CD4-positive, alpha-beta memory T cell (primary cell): ENCODE measurements at regions of chr10 and their contacts with region 1.

Region 1: DNA sequence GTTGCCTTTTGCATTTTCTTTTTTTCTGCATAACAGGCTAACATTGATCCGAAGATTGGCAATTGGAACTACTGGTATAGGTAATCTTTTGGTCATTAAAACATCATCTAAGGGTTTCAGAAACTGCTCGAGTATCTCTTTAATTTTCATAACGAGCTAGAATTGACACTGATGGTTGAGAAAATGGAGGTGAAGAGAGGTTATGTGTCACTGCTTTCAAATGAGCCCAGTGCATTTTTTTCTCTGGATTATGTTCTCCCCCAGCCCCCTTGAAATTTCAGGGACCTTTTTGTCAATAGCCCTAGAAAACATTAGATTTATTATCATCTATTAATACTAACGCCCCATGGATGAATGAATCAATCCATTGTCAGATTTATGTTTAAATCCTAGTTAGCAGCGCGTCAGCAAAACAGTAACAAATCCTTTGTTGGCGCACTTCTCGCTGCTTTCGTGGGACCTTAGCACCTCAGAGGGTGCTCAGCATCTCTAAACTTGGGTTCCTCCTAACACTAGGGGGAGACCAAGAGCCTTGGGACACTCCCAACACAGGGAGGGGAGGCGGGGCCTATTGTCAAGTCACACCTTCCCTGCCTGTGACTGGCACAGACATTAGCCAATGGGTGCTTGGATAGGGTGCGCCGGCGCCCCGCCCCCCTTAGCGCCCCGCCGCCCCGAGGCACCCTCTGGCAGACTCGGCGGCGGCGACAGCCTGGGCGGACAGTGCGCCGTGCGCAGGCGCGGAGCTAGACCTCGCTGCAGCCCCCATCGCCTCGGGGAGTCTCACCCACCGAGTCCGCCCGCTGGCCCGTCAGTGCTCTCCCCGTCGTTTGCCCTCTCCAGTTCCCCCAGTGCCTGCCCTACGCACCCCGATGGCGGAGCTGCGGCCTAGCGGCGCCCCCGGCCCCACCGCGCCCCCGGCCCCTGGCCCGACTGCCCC is at the start of gene SUFU:
- DNase-seq: peak; percentile 98 to 99 (median 98)
- H3K4me3 ChIP-seq: peak within 1 kb of the TSS; percentile 97 to 99
- H3K4me3 Mint-ChIP-seq: peak within 1 kb of the TSS in 2 of 8 donors; percentile 92 to 95
- H3K27ac ChIP-seq: peak within 1 kb of the TSS; percentile 91
- H3K27ac Mint-ChIP-seq: peak within 1 kb of the TSS in 6 of 7 donors; percentile 86 to 95 (median 94)
- H3K4me1 ChIP-seq: peaks cover 54% of the 10 kb centered on the region
- H3K4me1 Mint-ChIP-seq: peaks cover 21 to 49% (median 35%) of the 10 kb centered on the region in 4 donors
- H3K27me3 ChIP-seq: no peaks in the 10 kb centered on the region
- H3K27me3 Mint-ChIP-seq: no peaks in the 10 kb centered on the region
- total RNA-seq, gene SUFU: 20.5 to 22.0 TPM

Region 2: DNA sequence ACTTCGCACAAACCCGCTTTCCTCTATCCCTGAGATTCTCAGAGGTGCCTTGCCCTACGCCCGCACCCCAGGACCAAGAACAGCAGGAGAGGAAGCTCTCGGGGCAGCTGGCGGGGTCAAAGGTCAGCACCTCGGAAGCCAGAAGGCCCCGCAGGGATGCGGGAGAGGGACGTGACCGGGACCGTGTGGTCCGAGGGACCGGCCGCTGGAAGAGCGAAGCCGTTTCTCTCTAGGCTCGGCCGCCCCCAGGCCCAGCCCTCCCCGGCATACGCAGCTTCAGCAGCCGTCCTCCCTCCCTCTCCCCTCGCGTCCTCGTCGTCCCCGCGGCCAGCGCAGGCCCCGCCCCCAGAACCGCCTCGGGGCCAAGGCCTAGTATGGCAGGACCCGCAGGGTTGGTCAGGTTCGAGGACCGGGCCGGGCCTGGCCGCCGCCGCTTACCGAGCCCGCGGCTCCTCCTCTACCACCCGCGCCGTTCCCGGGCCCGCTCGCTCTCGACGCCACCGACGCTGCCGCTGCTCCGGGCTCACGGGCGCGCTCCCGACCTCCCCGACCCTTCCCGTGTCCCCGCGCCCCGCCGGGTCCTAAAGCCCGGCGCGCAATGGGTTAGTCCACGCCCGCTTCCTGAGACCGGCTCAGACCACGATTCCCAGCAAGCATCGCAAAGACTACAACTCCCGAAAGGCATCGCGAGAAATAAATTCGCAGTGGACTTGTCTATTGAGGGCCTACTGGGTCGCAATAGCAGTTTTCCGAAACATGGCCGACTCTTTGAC is 447.7 kb before region 1 on chr10 and contains the start of gene ARMH3:
- CTCF ChIA-PET with region 1: no interaction called
- POLR2A ChIA-PET with region 1: interaction called, 3 read pairs
- intact Hi-C with region 1: loop called (anchors 1 kb)
- DNase-seq: peak; percentile 89 to 92 (median 90)
- H3K4me3 ChIP-seq: peak within 1 kb of the TSS; percentile 89 to 99
- H3K4me3 Mint-ChIP-seq: peak within 1 kb of the TSS; percentile 95 to 98 (median 96)
- H3K27ac ChIP-seq: peak within 1 kb of the TSS; percentile 88
- H3K27ac Mint-ChIP-seq: peak within 1 kb of the TSS; percentile 94 to 99 (median 97)
- H3K4me1 ChIP-seq: peaks cover 51% of the 10 kb centered on the region
- H3K4me1 Mint-ChIP-seq: peaks cover 31 to 54% (median 42%) of the 10 kb centered on the region in 4 donors
- H3K27me3 ChIP-seq: no peaks in the 10 kb centered on the region
- H3K27me3 Mint-ChIP-seq: no peaks in the 10 kb centered on the region
- total RNA-seq, gene ARMH3: 31.4 to 31.8 TPM

Region 3: DNA sequence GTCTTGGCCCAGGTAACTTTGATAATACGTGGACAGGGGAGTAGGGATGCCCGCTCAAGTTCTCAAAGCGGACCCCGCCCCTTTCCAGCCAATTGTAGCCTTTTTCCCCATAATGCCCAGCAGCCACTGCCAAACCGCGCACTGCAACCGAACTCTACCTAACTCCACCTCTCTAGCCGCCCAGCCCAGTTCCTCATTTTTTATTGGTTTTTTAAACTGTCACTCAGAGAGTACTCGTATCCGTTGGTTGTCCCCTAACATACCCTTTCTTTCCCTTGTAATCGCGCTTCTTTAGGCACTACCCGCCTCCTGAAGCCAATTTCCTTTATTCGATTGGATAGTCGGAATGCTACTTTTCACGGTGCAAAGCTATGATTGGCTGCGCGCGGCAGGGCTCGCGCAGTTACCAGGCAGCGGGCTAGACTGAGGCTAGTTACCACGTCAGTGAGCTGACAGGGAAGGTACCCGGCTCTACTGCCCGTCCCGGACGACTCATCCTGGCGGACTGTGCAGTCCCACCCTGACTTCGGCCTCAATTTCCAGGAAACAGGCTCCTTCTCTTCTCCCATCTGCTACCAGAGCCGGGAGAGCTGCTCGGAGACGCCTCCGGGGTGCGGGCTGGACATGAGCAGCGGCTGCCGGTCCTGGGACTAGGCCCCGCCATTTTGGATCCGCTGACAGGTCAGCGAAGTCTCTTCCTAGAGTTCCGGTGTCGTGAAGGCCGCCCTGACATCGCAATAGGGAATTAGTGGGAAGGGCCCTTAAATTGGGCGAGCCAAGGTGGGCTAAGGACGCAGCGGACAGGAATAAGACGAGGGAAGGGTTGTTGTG is 258.2 kb before region 1 on chr10 and contains the start of gene GBF1:
- CTCF ChIA-PET with region 1: no interaction called
- POLR2A ChIA-PET with region 1: interaction called, 6 read pairs
- intact Hi-C with region 1: loop called (anchors 1 kb)
- DNase-seq: peak; percentile 95 to 98 (median 96)
- H3K4me3 ChIP-seq: peak within 1 kb of the TSS; percentile 51 to 94
- H3K4me3 Mint-ChIP-seq: peak within 1 kb of the TSS; percentile 84 to 99 (median 98)
- H3K27ac ChIP-seq: peak within 1 kb of the TSS; percentile 96
- H3K27ac Mint-ChIP-seq: peak within 1 kb of the TSS; percentile 89 to 98 (median 97)
- H3K4me1 ChIP-seq: peaks cover 64% of the 10 kb centered on the region
- H3K4me1 Mint-ChIP-seq: peaks cover 38 to 66% (median 50%) of the 10 kb centered on the region in 4 donors
- H3K27me3 ChIP-seq: peaks cover 6% of the 10 kb centered on the region
- H3K27me3 Mint-ChIP-seq: peaks cover 3 to 16% of the 10 kb centered on the region in 2 donors
- total RNA-seq, gene GBF1: 39.6 to 44.7 TPM

Region 4: GRCh38 chr10:102450194-102450938 is 53.2 kb before region 1 on chr10:
- CTCF ChIA-PET with region 1: interaction called, 30 read pairs
- POLR2A ChIA-PET with region 1: interaction called, 54 read pairs
- intact Hi-C with region 1: loop called (anchors 1 kb)
- DNase-seq: peak; percentile 93 to 96 (median 93)
- H3K4me3 ChIP-seq: peak overlapping the region; percentile 96
- H3K4me3 Mint-ChIP-seq: peak overlapping the region; percentile 90 to 96 (median 94)
- H3K27ac ChIP-seq: peak overlapping the region; percentile 79
- H3K27ac Mint-ChIP-seq: peak overlapping the region; percentile 81 to 97 (median 96)
- H3K4me1 ChIP-seq: peaks cover 23% of the 10 kb centered on the region
- H3K4me1 Mint-ChIP-seq: peaks cover 10 to 31% (median 23%) of the 10 kb centered on the region in 4 donors
- H3K27me3 ChIP-seq: no peaks in the 10 kb centered on the region
- H3K27me3 Mint-ChIP-seq: no peaks in the 10 kb centered on the region

Region 5: GRCh38 chr10:102583435-102584417 is 80.2 kb after region 1 on chr10:
- CTCF ChIA-PET with region 1: interaction called, 64 read pairs
- POLR2A ChIA-PET with region 1: interaction called, 27 read pairs
- intact Hi-C with region 1: loop called (anchors 1 kb)
- DNase-seq: peak; percentile 74 to 83 (median 76)
- H3K4me3 ChIP-seq: no peak overlapping the region
- H3K4me3 Mint-ChIP-seq: no peak overlapping the region
- H3K27ac ChIP-seq: no peak overlapping the region
- H3K27ac Mint-ChIP-seq: peak overlapping the region in 5 of 7 donors; percentile 7 to 84 (median 60)
- H3K4me1 ChIP-seq: peaks cover 8% of the 10 kb centered on the region
- H3K4me1 Mint-ChIP-seq: peaks cover 13 to 20% (median 15%) of the 10 kb centered on the region in 4 donors
- H3K27me3 ChIP-seq: no peaks in the 10 kb centered on the region
- H3K27me3 Mint-ChIP-seq: no peaks in the 10 kb centered on the region

Region 6: DNA sequence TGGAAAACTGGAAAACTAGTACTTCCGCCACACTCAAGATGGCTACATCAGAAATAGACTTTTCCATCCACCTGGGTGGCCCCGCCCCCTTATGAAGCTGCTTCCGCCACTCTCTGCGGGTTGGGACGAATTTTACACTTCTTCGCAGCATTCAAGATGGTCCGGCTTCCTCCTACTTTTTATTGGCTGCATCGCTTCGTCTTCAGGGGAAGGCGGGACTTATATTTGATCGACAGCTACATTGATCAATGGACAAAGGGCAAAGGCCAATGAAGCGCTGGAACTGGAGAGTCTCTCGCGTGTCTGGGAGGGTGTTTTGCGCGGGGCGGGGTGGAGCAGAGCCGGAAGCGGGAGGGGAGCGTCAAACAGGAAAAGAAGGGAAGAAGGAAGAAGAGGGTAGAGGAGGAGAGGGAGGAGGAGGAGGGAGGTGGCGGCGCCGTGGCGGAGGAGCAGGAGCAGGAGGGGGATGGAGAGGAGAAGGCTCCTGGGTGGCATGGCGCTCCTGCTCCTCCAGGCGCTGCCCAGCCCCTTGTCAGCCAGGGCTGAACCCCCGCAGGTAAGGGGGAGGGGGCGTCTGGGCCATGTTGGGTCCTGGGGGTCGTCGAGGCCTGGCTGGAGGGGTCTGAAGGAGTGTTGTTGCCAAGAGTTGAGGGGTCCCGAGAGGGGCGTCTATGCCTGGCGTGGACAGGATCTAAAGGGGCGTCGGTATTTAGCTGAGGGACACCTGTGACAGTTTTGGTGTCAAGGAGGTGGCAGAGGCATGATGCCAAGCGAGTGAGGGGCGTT is 240.2 kb after region 1 on chr10 and contains the start of gene WBP1L:
- CTCF ChIA-PET with region 1: no interaction called
- POLR2A ChIA-PET with region 1: interaction called, 5 read pairs
- intact Hi-C with region 1: loop called (anchors 1 kb)
- DNase-seq: peak; percentile 95 to 98 (median 97)
- H3K4me3 ChIP-seq: peak within 1 kb of the TSS; percentile 79 to 96
- H3K4me3 Mint-ChIP-seq: peak within 1 kb of the TSS; percentile 90 to 99 (median 96)
- H3K27ac ChIP-seq: peak within 1 kb of the TSS; percentile 81
- H3K27ac Mint-ChIP-seq: peak within 1 kb of the TSS; percentile 69 to 99 (median 94)
- H3K4me1 ChIP-seq: peaks cover 35% of the 10 kb centered on the region
- H3K4me1 Mint-ChIP-seq: peaks cover 33 to 50% (median 42%) of the 10 kb centered on the region in 4 donors
- H3K27me3 ChIP-seq: no peaks in the 10 kb centered on the region
- H3K27me3 Mint-ChIP-seq: no peaks in the 10 kb centered on the region
- total RNA-seq, gene WBP1L: 39.3 to 41.1 TPM

Region 7: DNA sequence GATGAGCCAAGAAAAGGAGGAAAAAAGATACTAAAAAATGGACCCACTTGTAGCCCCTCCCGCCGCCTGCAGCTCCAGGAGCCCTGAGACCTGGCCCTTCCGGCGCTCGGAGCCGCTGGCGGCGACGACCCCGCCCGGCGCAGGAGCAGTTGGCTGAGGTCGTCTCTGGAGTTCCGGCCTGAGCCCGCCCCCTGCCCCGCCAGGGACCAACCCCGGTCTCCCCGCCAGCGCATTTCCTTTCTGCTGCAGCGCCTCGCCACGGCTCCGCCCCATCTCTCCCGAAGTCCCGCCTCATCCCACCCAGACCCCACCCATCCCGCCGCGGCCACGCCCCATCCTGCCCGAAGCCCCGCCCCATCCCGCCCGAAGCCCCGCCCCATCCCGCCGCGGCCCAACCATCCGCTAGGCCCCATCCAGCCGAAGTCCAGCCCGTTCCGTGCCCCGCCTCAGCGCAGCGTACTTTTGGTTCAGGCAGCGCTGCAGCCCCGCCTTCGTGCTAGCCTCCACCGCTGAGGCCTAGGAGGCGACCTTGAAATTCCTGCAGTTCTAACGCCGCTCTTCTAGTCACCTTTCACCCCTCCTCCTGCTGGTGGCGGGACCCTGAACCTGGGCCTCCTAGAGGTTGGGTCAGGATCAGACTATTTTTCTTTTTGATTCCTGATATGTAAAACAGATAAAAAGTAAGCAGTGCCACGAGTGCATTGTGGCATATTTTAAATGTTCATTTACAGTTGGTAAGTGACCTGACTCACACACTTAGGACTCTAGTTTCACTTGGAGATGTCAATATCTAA is 1414.7 kb after region 1 on chr10 and contains the start of gene STN1:
- CTCF ChIA-PET with region 1: no interaction called
- POLR2A ChIA-PET with region 1: no interaction called
- intact Hi-C with region 1: loop called (anchors 5 kb)
- DNase-seq: peak; percentile 93 to 96 (median 95)
- H3K4me3 ChIP-seq: peak within 1 kb of the TSS; percentile 69 to 95
- H3K4me3 Mint-ChIP-seq: peak within 1 kb of the TSS; percentile 92 to 99 (median 96)
- H3K27ac ChIP-seq: peak within 1 kb of the TSS; percentile 82
- H3K27ac Mint-ChIP-seq: peak within 1 kb of the TSS; percentile 91 to 98 (median 95)
- H3K4me1 ChIP-seq: peaks cover 53% of the 10 kb centered on the region
- H3K4me1 Mint-ChIP-seq: peaks cover 18 to 50% (median 30%) of the 10 kb centered on the region in 4 donors
- H3K27me3 ChIP-seq: no peaks in the 10 kb centered on the region
- H3K27me3 Mint-ChIP-seq: no peaks in the 10 kb centered on the region
- total RNA-seq, gene STN1: 30.4 to 31.6 TPM